K562 (cell line): ENCODE measurements at regions of chr7 and their contacts with region 1.

Region 1: GRCh38 chr7:32865448-32866030 is 26.0 kb downstream of the KBTBD2 start:
- DNase-seq: no peak
- ATAC-seq: peak; percentile 48
- H3K4me3 ChIP-seq: no peak overlapping the region
- H3K27ac ChIP-seq: no peak overlapping the region
- H3K4me1 ChIP-seq: no peaks in the 10 kb centered on the region
- H3K27me3 ChIP-seq: no peaks in the 10 kb centered on the region
- CTCF ChIP-seq: no peak
- EP300 ChIP-seq: no peak
- POLR2A ChIP-seq: 0 out of 2 replicates have a peak, but pooled peaks have one; percentile 42
- RAD21 ChIP-seq: no peak

Region 2: GRCh38 chr7:32879460-32879859 is 13.9 kb after region 1 on chr7:
- CTCF ChIA-PET with region 1: interaction called, 3 read pairs
- POLR2A ChIA-PET with region 1: interaction called, 24 read pairs
- in situ Hi-C with region 1: no loop called
- intact Hi-C with region 1: no loop called
- DNase-seq: peak; percentile 23 to 68 (median 43)
- ATAC-seq: peak; percentile 80
- H3K4me3 ChIP-seq: no peak overlapping the region
- H3K27ac ChIP-seq: peak overlapping the region; percentile 63
- H3K4me1 ChIP-seq: peaks cover 16 to 34% of the 10 kb centered on the region in 2 experiments
- H3K27me3 ChIP-seq: no peaks in the 10 kb centered on the region
- CTCF ChIP-seq: no peak
- EP300 ChIP-seq: peak; percentile 64
- POLR2A ChIP-seq: no peak
- RAD21 ChIP-seq: no peak

Region 3: GRCh38 chr7:32928785-32929298 is 63.3 kb after region 1 on chr7:
- CTCF ChIA-PET with region 1: no interaction called
- POLR2A ChIA-PET with region 1: no interaction called
- in situ Hi-C with region 1: no loop called
- intact Hi-C with region 1: no loop called
- DNase-seq: no peak
- ATAC-seq: no peak
- H3K4me3 ChIP-seq: no peak overlapping the region
- H3K27ac ChIP-seq: no peak overlapping the region
- H3K4me1 ChIP-seq: no peaks in the 10 kb centered on the region
- H3K27me3 ChIP-seq: no peaks in the 10 kb centered on the region
- CTCF ChIP-seq: no peak
- EP300 ChIP-seq: no peak
- POLR2A ChIP-seq: no peak
- RAD21 ChIP-seq: no peak